ENCODE measurements at regions of chr2 and their contacts with region 1.

Region 1: DNA sequence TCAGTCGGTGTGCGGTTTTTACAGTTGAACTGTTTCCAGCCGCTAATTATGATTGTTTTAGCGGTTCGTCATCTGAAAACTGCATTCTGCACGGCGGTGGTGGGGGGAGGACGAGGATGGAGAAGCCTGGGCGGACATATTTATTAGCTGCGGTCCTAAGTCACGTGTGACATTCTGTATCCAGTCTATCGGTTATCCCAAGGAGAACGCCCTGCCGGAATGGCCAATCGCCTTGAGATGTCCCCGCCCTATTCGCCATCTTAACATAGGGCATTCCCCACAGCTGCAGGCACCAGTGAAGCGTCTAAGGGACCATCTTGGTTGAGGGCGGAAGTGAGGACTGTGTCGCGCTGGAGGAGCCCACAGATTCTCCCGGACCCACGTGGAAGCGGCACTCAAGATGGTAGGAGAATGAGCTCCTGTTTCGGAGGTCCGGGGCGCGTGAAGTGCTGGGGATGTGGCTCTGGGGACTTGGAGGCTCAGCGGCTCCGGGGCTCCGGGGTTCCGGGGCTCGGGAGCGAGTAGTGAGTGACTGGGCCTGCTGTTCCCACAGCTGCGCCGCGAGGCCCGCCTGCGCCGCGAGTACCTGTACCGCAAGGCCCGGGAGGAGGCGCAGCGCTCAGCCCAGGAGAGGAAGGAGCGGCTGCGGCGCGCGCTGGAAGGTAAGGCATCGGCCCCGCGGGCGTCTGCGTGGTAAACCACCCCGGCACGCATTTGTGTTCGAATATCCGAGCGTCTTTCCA is at the start of gene IMP4:
- DNase-seq: peak; percentile 99
- ATAC-seq: peak; percentile 89
- H3K4me3 ChIP-seq: peak within 1 kb of the TSS; percentile 94
- H3K27ac ChIP-seq: peak within 1 kb of the TSS; percentile 64
- H3K4me1 ChIP-seq: peaks cover 6 to 18% of the 10 kb centered on the region in 2 experiments
- H3K27me3 ChIP-seq: no peaks in the 10 kb centered on the region
- CTCF ChIP-seq: peak in 2 of 3 experiments; percentile 12 to 28; a peak in 2 of 6 replicates
- POLR2A ChIP-seq: peak; percentile 69
- RAD21 ChIP-seq: no peak
- total RNA-seq, gene IMP4: 121 TPM

Region 2: DNA sequence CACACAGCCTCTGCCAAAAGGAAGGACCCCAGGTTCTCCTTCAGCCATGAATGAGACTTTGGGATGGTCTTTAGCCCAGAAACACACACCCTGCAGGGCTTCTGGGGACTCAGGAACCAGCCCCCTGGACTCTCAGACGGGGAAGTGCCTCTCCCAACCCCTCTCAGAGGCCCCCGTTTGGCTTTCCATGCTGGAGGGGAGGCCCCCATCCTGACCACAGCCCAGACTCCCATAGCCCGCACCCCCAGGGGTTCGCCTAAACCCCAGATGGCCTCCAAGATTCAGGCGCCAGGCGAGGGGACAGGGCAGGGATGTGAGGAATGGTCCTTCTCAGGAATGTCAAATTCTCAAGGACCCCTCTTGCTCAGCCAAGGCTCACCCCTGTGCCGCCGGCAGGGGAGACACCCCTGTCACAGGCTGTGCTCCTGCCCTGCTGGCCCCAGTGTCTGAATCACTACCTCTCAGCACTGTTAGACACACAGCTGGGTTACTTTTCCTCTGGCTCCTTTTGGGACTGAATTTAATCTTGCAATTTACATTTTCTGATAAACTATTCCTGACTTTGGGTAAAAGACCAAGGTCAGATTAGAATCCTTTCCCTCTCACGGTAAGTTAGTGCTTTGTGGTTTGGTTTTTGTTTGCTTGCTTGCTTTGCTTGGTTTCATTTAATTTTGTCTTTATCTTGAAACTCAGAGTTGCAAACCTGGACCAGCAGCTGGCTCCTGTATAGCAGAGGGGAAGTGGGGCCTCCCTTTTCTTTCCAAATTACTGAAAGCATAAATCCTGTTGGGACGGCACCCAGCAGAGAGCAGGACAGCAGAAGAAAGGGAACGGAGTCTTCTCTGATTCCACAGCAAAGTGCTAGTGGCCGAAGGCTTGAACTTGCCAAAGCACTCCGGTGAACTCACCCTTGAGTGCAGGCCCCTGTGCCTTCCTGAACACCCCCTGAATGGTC is 562.1 kb before region 1 on chr2:
- CTCF ChIA-PET with region 1: no interaction called
- POLR2A ChIA-PET with region 1: no interaction called
- RAD21 ChIA-PET with region 1: no interaction called
- intact Hi-C with region 1: no loop called
- DNase-seq: no peak
- ATAC-seq: no peak
- H3K4me3 ChIP-seq: no peak overlapping the region
- H3K27ac ChIP-seq: no peak overlapping the region
- H3K4me1 ChIP-seq: no peaks in the 10 kb centered on the region
- H3K27me3 ChIP-seq: peaks cover 45% of the 10 kb centered on the region
- CTCF ChIP-seq: no peak
- POLR2A ChIP-seq: no peak
- RAD21 ChIP-seq: no peak

Region 3: GRCh38 chr2:130303169-130303568 is 39.5 kb before region 1 on chr2:
- CTCF ChIA-PET with region 1: no interaction called
- POLR2A ChIA-PET with region 1: no interaction called
- RAD21 ChIA-PET with region 1: no interaction called
- intact Hi-C with region 1: no loop called
- DNase-seq: no peak
- ATAC-seq: no peak
- H3K4me3 ChIP-seq: no peak overlapping the region
- H3K27ac ChIP-seq: no peak overlapping the region
- H3K4me1 ChIP-seq: peaks cover 0 to 2% of the 10 kb centered on the region in 2 experiments; a peak in 1 of 4 replicates
- H3K27me3 ChIP-seq: peaks cover 40% of the 10 kb centered on the region
- CTCF ChIP-seq: no peak
- POLR2A ChIP-seq: no peak
- RAD21 ChIP-seq: no peak

Region 4: GRCh38 chr2:130366720-130367119 is 24.0 kb after region 1 on chr2:
- CTCF ChIA-PET with region 1: no interaction called
- POLR2A ChIA-PET with region 1: no interaction called
- RAD21 ChIA-PET with region 1: no interaction called
- intact Hi-C with region 1: loop called (anchors 2 kb)
- DNase-seq: no peak
- ATAC-seq: no peak
- H3K4me3 ChIP-seq: no peak overlapping the region
- H3K27ac ChIP-seq: no peak overlapping the region
- H3K4me1 ChIP-seq: peaks cover 5 to 6% of the 10 kb centered on the region in 2 experiments; a peak in 3 of 4 replicates
- H3K27me3 ChIP-seq: no peaks in the 10 kb centered on the region
- CTCF ChIP-seq: no peak
- POLR2A ChIP-seq: no peak
- RAD21 ChIP-seq: no peak

Region 5: DNA sequence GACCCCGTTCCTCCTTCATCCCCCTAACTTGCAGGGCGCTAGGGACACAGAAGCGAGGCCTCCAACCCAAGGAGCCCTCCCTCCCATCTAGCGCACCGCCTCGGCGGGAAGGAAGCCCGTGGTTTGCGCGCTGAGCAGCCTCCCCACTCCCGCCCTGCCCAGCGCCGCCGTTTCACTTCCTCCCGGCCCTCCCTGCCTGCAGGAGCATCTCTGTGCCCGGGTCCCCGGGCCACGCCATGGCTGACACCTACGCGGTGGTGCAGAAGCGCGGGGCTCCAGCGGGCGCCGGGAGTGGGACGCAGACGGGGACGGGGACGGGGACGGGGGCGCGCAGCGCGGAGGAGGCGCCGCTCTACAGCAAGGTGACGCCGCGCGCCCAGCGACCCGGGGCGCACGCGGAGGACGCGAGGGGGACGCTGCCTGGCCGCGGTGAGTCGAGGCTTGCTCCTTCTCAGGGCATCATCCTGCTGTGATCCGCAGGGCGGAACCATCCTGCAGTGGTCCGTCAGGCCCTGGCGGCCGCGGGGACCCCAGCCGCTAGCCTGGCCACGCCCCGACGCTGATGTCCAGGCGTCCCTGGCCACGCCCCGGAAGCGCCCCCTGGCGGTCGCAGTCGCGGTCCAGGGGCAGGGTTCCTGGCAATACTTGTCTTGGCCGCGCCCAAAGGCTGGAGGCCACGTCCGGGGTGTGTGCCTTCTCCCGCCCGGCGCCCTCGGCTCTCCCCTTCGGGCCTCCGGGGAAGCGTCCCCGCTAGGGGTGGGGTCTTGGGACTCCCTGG is 29.5 kb after region 1 on chr2:
- CTCF ChIA-PET with region 1: interaction called, 12 read pairs
- POLR2A ChIA-PET with region 1: no interaction called
- RAD21 ChIA-PET with region 1: no interaction called
- intact Hi-C with region 1: loop called (anchors 2 kb)
- DNase-seq: peak; percentile 60
- ATAC-seq: peak; percentile 93
- H3K4me3 ChIP-seq: peak overlapping the region; percentile 75 to 82
- H3K27ac ChIP-seq: peak overlapping the region; percentile 80
- H3K4me1 ChIP-seq: peaks cover 17 to 32% of the 10 kb centered on the region in 2 experiments; a peak in 3 of 4 replicates
- H3K27me3 ChIP-seq: no peaks in the 10 kb centered on the region
- CTCF ChIP-seq: peak; percentile 56 to 90 (median 69); a peak in 5 of 6 replicates
- POLR2A ChIP-seq: peak; percentile 85
- RAD21 ChIP-seq: peak; percentile 42

Region 6: DNA sequence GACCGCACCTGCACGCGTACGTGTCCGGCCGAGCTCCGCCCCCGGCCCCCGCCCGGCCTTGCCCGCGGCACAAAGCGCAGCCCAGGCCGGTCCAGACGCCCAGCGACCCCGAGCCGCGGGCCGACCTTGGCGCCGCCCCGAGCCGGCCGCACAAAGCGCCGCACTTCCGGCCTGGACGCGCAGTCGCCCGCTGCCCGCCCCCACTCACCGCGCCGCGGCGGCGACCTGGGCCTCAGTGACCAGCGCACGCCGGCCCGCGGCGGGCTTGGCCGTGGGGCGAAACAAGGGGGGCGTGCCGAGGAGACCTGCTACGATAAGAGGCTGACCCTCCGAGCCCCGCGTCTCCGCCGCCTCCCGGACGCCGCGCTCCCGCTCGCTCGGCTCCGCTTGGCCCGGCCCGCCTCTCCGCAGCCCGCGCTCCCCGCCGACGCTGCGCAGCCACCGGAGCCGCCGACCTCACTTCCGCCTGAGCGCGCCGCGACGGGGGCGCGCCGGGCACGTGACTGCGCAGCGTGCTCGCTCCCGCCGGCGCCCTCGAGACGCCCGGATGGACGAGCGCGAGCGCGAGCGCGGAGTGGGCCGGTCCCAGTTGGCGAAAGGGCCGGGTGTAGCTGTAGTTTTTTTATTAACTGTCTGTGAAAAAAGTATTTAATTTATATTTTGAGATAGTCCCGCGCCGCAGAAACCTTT is 750.4 kb after region 1 on chr2 and contains the start of gene FAM168B:
- CTCF ChIA-PET with region 1: no interaction called
- POLR2A ChIA-PET with region 1: no interaction called
- RAD21 ChIA-PET with region 1: no interaction called
- intact Hi-C with region 1: loop called (anchors 5 kb)
- DNase-seq: peak; percentile 73
- ATAC-seq: peak; percentile 87
- H3K4me3 ChIP-seq: peak within 1 kb of the TSS; percentile 75 to 84
- H3K27ac ChIP-seq: peak within 1 kb of the TSS; percentile 98
- H3K4me1 ChIP-seq: peaks cover 3 to 16% of the 10 kb centered on the region in 2 experiments; a peak in 3 of 4 replicates
- H3K27me3 ChIP-seq: no peaks in the 10 kb centered on the region
- CTCF ChIP-seq: no peak
- POLR2A ChIP-seq: peak; percentile 37
- RAD21 ChIP-seq: no peak
- total RNA-seq, gene FAM168B: 94.5 TPM

Region 7: GRCh38 chr2:131673392-131674173 is 1330.9 kb after region 1 on chr2:
- CTCF ChIA-PET with region 1: no interaction called
- POLR2A ChIA-PET with region 1: no interaction called
- RAD21 ChIA-PET with region 1: no interaction called
- intact Hi-C with region 1: no loop called
- DNase-seq: peak; percentile 48
- ATAC-seq: peak; percentile 91
- H3K4me3 ChIP-seq: no peak overlapping the region
- H3K27ac ChIP-seq: no peak overlapping the region; the same call in 1 of the 2 replicates
- H3K4me1 ChIP-seq: peaks cover 7 to 31% of the 10 kb centered on the region in 2 experiments; a peak in 3 of 4 replicates
- H3K27me3 ChIP-seq: no peaks in the 10 kb centered on the region
- CTCF ChIP-seq: peak; percentile 76 to 92 (median 77)
- POLR2A ChIP-seq: no peak
- RAD21 ChIP-seq: peak; percentile 85

Measured in HCT116 (cell line).